Motor neuron (in vitro differentiated cells): ENCODE measurements at regions of chr16 and their contacts with region 1.

Region 1: DNA sequence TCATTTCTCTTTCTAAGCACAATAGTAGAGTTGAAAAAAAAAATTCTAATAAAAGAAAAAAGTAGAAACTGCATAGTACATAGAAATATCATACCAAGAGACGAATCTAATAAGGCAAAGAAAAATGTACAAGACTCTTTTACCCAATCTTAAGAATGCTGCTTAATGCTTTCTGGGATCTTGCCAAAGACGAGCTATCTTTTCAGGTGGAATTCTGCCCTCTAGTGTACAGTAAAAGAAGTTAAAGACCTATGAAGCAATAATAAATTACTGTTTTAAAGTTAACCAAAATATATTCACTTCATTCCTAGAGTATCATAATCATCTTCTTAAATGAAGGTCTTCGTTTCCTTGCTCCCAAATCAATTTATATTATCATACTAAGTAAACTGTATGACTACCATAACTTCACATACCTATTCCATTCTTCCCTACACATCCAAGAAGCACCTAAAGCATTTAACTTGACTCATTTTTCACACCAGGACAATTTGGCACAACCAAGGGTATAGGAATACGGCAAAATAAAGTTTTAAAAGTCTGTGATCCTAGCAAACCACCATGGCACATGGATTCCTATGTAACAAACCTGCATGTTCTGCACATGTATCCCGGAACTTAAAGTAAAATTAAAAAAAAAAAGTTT is 47.7 kb downstream of the CFDP1 start:
- ATAC-seq: peak in 3 of 8 experiments; percentile 34 to 50 (median 38)
- H3K4me3 ChIP-seq: no peak overlapping the region
- H3K27ac ChIP-seq: no peak overlapping the region
- H3K4me1 ChIP-seq: no peaks in the 10 kb centered on the region

Region 2: GRCh38 chr16:75218256-75219070 is 167.2 kb before region 1 on chr16 and contains the start of gene CTRB1:
- in situ Hi-C with region 1: loop called in 5 of 9 experiments (anchors 25 kb)
- ATAC-seq: peak in 1 of 8 experiments; percentile 36
- H3K4me3 ChIP-seq: no peak within 1 kb of the TSS
- H3K27ac ChIP-seq: no peak within 1 kb of the TSS
- H3K4me1 ChIP-seq: no peaks in the 10 kb centered on the region
- total RNA-seq, gene CTRB1: 0.11 to 1.5 (median 0.41) TPM

Region 3: DNA sequence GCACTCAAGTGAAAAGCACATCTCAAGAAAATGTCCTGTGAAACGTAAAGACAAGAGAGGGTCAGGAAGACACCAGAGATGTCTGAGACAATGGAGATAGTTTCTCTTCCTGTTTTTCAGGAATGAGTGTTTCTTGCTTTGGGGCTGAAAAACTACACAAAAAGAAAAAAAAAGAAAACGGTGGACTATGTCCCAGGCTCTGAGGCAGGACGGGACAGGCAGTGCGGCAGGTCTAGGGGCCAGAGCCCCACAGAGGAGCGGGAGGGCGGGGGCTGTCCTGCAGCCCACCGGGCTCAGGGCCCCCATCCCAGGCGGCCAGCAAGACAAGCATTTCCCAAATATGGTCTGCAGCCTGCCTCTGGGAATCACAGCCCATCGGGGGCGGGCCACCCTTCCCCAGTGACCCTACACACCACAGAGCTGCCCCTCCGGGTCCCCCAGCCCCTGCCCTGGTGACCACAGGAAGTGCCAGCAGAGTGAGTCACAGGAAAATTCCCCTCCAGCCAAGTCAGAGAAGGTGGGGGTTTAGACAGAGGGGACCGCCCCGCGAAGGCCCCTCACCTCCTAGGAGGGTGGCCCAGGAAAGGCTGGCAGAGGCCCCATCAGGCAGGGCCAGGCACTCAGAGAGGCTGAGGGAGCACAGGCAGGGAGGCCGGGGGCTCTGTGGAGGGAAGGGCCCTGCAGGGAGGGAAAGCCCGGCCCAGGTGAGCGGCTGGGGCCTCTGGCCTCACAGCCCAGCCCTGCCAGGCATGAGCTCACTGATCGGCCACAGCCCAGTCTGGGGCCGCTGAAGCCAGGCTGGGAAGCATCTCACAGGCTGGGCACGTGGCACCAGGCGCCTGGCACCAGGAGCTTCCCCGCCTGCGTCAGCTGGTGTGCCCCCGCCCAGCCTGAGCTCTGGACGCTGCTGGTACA is 140.5 kb before region 1 on chr16:
- in situ Hi-C with region 1: loop called in 1 of 9 experiments (anchors 25 kb)
- ATAC-seq: peak; percentile 50 to 89 (median 87)
- H3K4me3 ChIP-seq: no peak overlapping the region
- H3K27ac ChIP-seq: peak overlapping the region in 1 of 2 donors; percentile 66
- H3K4me1 ChIP-seq: peaks cover 16 to 28% of the 10 kb centered on the region in 2 donors